ENCODE measurements at regions of chr2 and their contacts with region 1.

Region 1: DNA sequence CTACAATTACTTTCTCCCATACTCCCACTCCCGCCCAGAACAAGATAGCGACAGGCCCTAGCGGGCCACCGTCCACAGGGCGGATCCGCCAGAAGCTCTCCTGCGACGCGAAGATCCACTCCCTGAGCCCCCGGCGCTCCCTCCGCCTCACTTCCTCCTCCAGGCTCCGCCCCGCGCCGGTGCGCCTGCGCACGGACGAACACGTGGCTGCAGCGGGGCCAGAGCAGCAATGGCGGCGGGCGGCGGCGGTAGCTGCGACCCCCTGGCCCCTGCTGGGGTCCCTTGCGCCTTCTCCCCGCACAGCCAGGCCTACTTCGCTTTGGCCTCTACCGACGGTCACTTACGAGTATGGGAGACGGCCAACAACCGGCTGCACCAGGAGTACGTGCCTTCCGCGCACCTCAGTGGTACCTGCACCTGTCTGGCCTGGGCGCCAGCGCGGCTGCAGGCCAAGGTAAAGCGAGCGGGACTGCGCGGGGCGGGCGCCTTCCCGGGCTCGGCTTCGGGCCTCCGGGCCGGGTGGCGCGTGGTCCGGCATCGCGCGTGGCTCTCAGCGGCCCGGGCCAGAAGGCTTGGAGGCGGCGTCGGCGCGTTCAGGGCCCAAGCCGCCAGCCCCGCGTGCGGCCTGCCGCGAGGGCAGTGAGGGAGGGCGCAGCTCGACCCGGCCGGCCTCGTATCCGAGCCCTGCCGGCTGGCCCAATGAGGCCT is at the start of gene WDR43:
- DNase-seq: peak; percentile 99
- ATAC-seq: peak; percentile 99
- total RNA-seq, gene WDR43: 16.8 TPM

Region 2: GRCh38 chr2:28566521-28567041 is 328.0 kb before region 1 on chr2:
- intact Hi-C with region 1: loop called (anchors 10 kb)
- DNase-seq: peak; percentile 93
- ATAC-seq: peak; percentile 96

Region 3: DNA sequence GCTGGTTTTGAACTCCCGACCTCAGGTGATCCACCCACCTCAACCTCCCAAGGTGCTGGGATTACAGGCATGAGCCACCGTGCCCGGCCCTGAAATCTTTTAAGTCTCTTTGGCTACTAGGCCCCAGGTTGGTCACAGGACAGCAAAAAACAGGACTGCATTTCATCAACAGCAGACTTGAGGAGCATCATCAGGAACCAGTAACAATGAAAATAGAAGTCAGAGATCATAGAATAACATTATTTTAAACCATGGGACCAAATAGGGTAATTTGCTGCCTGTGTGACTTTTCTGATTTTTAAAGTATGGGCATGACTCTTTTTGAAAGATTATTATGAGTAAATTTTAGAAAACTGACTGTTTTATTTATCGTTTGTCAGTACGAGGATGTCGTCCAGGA is 118.2 kb before region 1 on chr2:
- intact Hi-C with region 1: no loop called
- DNase-seq: no peak
- ATAC-seq: no peak

Region 4: DNA sequence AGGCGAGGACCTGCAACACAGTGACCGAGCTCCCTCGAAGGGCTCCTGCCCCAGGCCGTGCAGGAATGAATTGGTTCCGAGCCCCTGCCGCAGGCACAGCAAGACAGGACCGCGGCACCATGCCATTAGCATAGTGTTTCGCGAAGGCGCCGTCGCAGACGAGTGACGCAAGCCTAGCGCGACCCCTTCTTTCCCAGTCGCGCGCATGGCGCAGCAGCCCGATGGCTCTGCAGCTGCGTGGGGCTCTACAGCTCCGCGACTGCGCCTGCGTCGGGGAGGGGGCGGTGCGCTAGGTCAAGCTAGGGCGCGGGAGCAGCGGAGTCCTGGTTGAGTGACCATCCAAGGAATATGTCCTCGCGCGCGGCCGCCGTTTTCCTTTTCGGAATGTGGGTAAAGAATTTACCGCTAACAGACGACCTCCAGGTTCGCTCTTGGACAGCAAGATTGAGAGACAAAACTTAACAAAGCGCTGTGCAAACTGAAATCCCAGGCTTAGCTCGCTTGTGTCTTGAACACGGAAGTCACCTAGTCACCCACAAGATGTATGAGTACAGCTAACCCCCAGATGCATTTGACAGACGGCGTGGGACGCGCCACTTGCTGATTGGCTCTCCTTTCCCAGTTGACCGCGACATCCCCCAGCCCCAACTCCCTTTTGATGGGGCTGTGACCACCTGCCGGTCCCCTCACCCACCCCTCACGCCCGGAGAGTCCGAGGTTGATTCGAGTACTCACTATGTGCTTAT is 24.3 kb before region 1 on chr2 and contains the start of gene TRMT61B:
- intact Hi-C with region 1: loop called (anchors 1 kb)
- DNase-seq: peak; percentile 98
- ATAC-seq: peak; percentile 100
- total RNA-seq, gene TRMT61B: 24.6 TPM

Region 5: DNA sequence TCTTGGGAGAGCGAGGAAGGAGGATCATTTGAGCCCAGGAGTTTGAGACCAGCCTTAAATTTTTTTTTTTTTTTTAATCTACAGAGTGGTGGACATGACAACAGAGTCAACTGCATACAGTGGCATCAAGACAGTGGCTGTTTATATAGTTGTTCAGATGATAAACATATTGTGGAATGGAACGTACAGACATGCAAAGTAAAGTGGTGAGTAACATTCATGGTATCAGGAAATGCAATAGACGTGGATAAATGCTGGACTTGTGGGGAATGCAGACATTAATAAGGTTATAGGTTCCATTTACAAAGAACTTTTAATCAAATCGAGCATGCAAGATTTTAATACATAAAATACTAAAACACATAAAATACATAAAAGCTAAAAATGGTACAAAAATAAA is 11.8 kb after region 1 on chr2:
- intact Hi-C with region 1: no loop called
- DNase-seq: no peak
- ATAC-seq: no peak